Activated CD4-positive, alpha-beta memory T cell treated with anti-CD3 and anti-CD28 coated beads for 36 hours (primary cell): ENCODE measurements at regions of chr14 and their contacts with region 1.

Region 1: GRCh38 chr14:98167705-98168104 is 1104.3 kb downstream of the BCL11B start:
- DNase-seq: peak; percentile 54
- H3K4me3 Mint-ChIP-seq: peak overlapping the region; percentile 17
- H3K27ac Mint-ChIP-seq: peak overlapping the region; percentile 97
- H3K4me1 Mint-ChIP-seq: peaks cover 67% of the 10 kb centered on the region
- H3K27me3 Mint-ChIP-seq: no peaks in the 10 kb centered on the region

Region 2: GRCh38 chr14:97299661-97300060 is 868.0 kb before region 1 on chr14:
- CTCF ChIA-PET with region 1: no interaction called
- POLR2A ChIA-PET with region 1: no interaction called
- intact Hi-C with region 1: no loop called
- DNase-seq: peak; percentile 50
- H3K4me3 Mint-ChIP-seq: no peak overlapping the region
- H3K27ac Mint-ChIP-seq: no peak overlapping the region
- H3K4me1 Mint-ChIP-seq: peaks cover 6% of the 10 kb centered on the region
- H3K27me3 Mint-ChIP-seq: peaks cover 4% of the 10 kb centered on the region

Region 3: DNA sequence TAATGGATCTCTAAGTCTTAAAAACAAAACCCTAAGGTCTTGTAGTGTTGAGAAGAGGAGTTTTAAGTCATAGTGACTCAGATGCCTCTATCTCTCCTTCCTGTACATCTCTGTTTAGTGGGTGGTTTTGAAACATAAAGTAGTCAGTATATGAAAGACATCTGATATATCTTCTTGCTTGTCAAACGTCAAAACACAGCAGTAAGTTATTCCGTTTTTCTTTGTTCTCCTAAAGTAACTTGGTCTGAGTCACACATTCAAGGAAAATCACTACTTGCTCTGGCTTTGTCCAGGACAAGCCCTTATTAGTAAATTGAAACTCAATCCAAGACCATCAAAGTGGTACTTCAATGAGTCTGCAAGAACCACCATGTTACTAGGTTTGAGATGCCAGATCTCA is 68.2 kb before region 1 on chr14:
- CTCF ChIA-PET with region 1: no interaction called
- POLR2A ChIA-PET with region 1: no interaction called
- intact Hi-C with region 1: loop called (anchors 2 kb)
- DNase-seq: no peak
- H3K4me3 Mint-ChIP-seq: no peak overlapping the region
- H3K27ac Mint-ChIP-seq: peak overlapping the region; percentile 70
- H3K4me1 Mint-ChIP-seq: peaks cover 33% of the 10 kb centered on the region
- H3K27me3 Mint-ChIP-seq: no peaks in the 10 kb centered on the region

Region 4: GRCh38 chr14:98182393-98183055 is 14.8 kb after region 1 on chr14:
- CTCF ChIA-PET with region 1: interaction called, 14 read pairs
- POLR2A ChIA-PET with region 1: interaction called, 47 read pairs
- intact Hi-C with region 1: loop called (anchors 1 kb)
- DNase-seq: peak; percentile 82
- H3K4me3 Mint-ChIP-seq: peak overlapping the region; percentile 52
- H3K27ac Mint-ChIP-seq: peak overlapping the region; percentile 100
- H3K4me1 Mint-ChIP-seq: peaks cover 94% of the 10 kb centered on the region
- H3K27me3 Mint-ChIP-seq: no peaks in the 10 kb centered on the region

Region 5: GRCh38 chr14:98189062-98189461 is 21.4 kb after region 1 on chr14:
- CTCF ChIA-PET with region 1: interaction called, 7 read pairs
- POLR2A ChIA-PET with region 1: interaction called, 23 read pairs
- intact Hi-C with region 1: loop called (anchors 1 kb)
- DNase-seq: peak; percentile 65
- H3K4me3 Mint-ChIP-seq: peak overlapping the region; percentile 75
- H3K27ac Mint-ChIP-seq: peak overlapping the region; percentile 100
- H3K4me1 Mint-ChIP-seq: peaks cover 94% of the 10 kb centered on the region
- H3K27me3 Mint-ChIP-seq: no peaks in the 10 kb centered on the region

Region 6: DNA sequence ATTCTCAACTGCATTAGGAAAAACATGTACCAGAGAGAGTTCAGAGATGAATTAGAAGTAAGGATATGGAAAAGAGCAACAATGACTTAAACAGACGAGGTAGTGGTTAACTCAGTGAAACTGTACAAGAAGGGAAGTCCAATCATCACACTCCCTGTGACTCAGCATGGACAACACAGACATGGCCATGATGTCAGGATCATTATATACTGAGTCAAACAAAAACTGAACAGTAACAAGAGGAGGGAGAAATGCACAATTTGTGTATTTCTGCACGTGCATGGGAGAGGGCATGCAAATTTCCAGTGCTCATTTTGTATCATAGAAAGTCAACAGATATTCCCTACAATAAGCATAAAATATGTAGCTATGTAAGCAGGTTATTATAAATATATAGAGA is 66.5 kb after region 1 on chr14:
- CTCF ChIA-PET with region 1: interaction called, 4 read pairs
- POLR2A ChIA-PET with region 1: interaction called, 12 read pairs
- intact Hi-C with region 1: loop called (anchors 1 kb)
- DNase-seq: peak; percentile 72
- H3K4me3 Mint-ChIP-seq: no peak overlapping the region
- H3K27ac Mint-ChIP-seq: peak overlapping the region; percentile 36
- H3K4me1 Mint-ChIP-seq: peaks cover 71% of the 10 kb centered on the region
- H3K27me3 Mint-ChIP-seq: no peaks in the 10 kb centered on the region